Gastrocnemius medialis (tissue), 4 donors: ENCODE measurements at regions of chr1 and their contacts with region 1.

Region 1: GRCh38 chr1:209576798-209577197 is 6.7 kb upstream of the CAMK1G start:
- DNase-seq: peak; percentile 32 to 73
- ATAC-seq: peak; percentile 93 to 98
- H3K4me3 ChIP-seq: no peak overlapping the region
- H3K27ac ChIP-seq: no peak overlapping the region
- H3K4me1 ChIP-seq: no peaks in the 10 kb centered on the region
- H3K27me3 ChIP-seq: peaks cover 0 to 2% (median 2%) of the 10 kb centered on the region in 3 donors
- CTCF ChIP-seq: peak; percentile 80 to 94 (median 89)
- POLR2A ChIP-seq: no peak

Region 2: DNA sequence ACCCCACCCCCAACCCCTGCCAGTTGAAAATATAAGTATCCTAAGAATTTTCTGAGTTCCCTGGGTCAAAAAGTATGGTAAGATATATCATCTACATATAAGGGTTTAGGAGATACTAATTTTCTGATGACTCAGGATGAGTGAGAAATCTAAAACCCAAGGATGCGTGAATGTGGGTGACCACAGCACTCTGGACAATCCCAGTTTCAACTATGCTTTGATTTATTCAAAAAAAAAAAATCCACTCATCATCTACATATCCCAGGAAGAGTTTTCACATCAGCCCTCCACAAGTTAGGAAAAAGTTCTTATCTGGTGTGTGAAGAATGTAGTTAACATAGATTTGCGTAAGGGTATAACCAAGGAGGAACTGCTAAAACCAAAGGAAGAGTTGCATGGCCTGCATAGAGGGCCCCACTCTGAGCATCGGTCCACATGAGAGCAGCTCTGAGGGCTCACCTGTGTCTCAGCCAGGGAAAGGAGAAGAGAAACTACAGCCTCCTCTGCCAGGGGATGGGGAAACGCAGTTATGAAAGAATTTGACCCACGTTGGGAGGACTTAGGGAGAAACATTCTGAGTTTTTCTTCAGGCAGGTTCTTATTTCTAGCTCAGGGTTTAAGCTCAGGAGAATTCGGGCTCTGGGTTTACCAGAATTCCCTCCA is 56.7 kb after region 1 on chr1:
- in situ Hi-C with region 1: loop called in 1 of 4 experiments (anchors 10 kb)
- intact Hi-C with region 1: no loop called
- DNase-seq: no peak
- ATAC-seq: no peak
- H3K4me3 ChIP-seq: no peak overlapping the region
- H3K27ac ChIP-seq: no peak overlapping the region
- H3K4me1 ChIP-seq: peaks cover 25 to 38% of the 10 kb centered on the region in 2 donors
- H3K27me3 ChIP-seq: no peaks in the 10 kb centered on the region
- CTCF ChIP-seq: no peak
- POLR2A ChIP-seq: no peak

Region 3: GRCh38 chr1:209747580-209748262 is 170.9 kb after region 1 on chr1:
- in situ Hi-C with region 1: loop called in 1 of 4 experiments (anchors 5 kb)
- intact Hi-C with region 1: loop called (anchors 2 kb)
- DNase-seq: peak; percentile 81 to 96
- ATAC-seq: peak; percentile 91 to 98
- H3K4me3 ChIP-seq: peak overlapping the region in 3 of 4 donors; percentile 20 to 39 (median 32)
- H3K27ac ChIP-seq: peak overlapping the region; percentile 31 to 65 (median 48)
- H3K4me1 ChIP-seq: no peaks in the 10 kb centered on the region
- H3K27me3 ChIP-seq: no peaks in the 10 kb centered on the region
- CTCF ChIP-seq: peak; percentile 81 to 95 (median 81)
- POLR2A ChIP-seq: no peak

Region 4: DNA sequence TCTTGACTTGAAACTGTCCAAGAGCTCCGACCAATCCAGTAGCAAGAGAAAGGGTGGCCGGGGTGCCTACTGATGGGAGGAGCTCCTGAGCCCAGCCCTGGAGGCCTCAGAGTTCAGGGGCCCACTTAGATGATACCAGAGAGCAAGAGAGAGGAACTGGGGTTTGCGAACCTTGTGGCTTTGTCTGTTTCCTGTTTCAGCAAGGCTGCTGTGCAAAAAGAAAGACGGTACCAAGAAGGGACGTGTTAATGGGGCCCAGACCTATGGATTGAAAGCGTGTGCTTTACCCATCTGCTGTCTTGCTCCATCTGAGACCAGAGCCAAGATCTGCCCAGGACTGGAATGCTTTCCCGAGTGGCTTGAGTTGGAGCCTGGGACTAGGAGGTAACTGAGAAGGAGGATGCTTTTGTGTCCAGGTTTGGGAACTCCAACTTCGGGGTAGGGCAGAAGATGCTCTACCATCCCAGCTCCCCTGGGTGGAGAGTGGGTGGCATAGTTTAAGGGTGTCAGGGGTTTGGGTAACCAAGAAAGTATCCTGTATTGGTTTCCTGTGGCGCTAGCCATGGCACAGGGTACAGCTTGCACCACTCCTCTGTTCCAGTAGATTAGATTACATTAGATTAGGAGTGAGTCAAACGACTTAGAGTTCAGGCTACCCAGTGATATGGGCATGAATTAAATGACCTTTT is 179.3 kb after region 1 on chr1 and contains the start of gene TRAF3IP3:
- in situ Hi-C with region 1: loop called in 1 of 4 experiments (anchors 5 kb)
- intact Hi-C with region 1: no loop called
- DNase-seq: peak in 1 of 2 donors; percentile 22
- ATAC-seq: no peak
- H3K4me3 ChIP-seq: no peak within 1 kb of the TSS
- H3K27ac ChIP-seq: no peak within 1 kb of the TSS
- H3K4me1 ChIP-seq: peaks cover 0 to 12% of the 10 kb centered on the region in 2 donors
- H3K27me3 ChIP-seq: no peaks in the 10 kb centered on the region
- CTCF ChIP-seq: no peak
- POLR2A ChIP-seq: no peak
- total RNA-seq, gene TRAF3IP3: 0.16 to 1.5 (median 0.35) TPM in 3 of 4 donors, not detected in the other